IMR-90 (cell line): ENCODE measurements at regions of chr11 and their contacts with region 1.

Region 1: GRCh38 chr11:111512296-111513239 is at the start of gene BTG4:
- DNase-seq: no peak
- ATAC-seq: peak; percentile 40
- H3K4me3 ChIP-seq: peak within 1 kb of the TSS; percentile 16; the same call in 1 of the 2 replicates
- H3K27ac ChIP-seq: no peak within 1 kb of the TSS; the same call in 1 of the 2 replicates
- H3K4me1 ChIP-seq: no peaks in the 10 kb centered on the region
- H3K27me3 ChIP-seq: peaks cover 4% of the 10 kb centered on the region
- CTCF ChIP-seq: no peak
- POLR2A ChIP-seq: no peak
- RAD21 ChIP-seq: no peak
- total RNA-seq, gene BTG4: not detected in 2 replicates

Region 2: GRCh38 chr11:111472228-111472627 is 40.3 kb before region 1 on chr11:
- CTCF ChIA-PET with region 1: no interaction called
- POLR2A ChIA-PET with region 1: no interaction called
- dilution Hi-C with region 1: no loop called
- in situ Hi-C with region 1: no loop called
- intact Hi-C with region 1: loop called (anchors 5 kb)
- DNase-seq: no peak
- ATAC-seq: no peak
- H3K4me3 ChIP-seq: no peak overlapping the region
- H3K27ac ChIP-seq: no peak overlapping the region
- H3K4me1 ChIP-seq: no peaks in the 10 kb centered on the region
- H3K27me3 ChIP-seq: no peaks in the 10 kb centered on the region; the same call in 1 of the 2 replicates
- CTCF ChIP-seq: no peak
- POLR2A ChIP-seq: no peak
- RAD21 ChIP-seq: no peak

Region 3: GRCh38 chr11:111694851-111695250 is 182.3 kb after region 1 on chr11:
- CTCF ChIA-PET with region 1: no interaction called
- POLR2A ChIA-PET with region 1: no interaction called
- dilution Hi-C with region 1: no loop called
- in situ Hi-C with region 1: no loop called
- intact Hi-C with region 1: no loop called
- DNase-seq: peak; percentile 99
- ATAC-seq: peak; percentile 78
- H3K4me3 ChIP-seq: no peak overlapping the region
- H3K27ac ChIP-seq: no peak overlapping the region
- H3K4me1 ChIP-seq: peaks cover 17% of the 10 kb centered on the region
- H3K27me3 ChIP-seq: no peaks in the 10 kb centered on the region
- CTCF ChIP-seq: no peak
- POLR2A ChIP-seq: no peak
- RAD21 ChIP-seq: no peak

Region 4: GRCh38 chr11:112016765-112017356 is 504.3 kb after region 1 on chr11:
- CTCF ChIA-PET with region 1: no interaction called
- POLR2A ChIA-PET with region 1: no interaction called
- dilution Hi-C with region 1: no loop called
- in situ Hi-C with region 1: no loop called
- intact Hi-C with region 1: no loop called
- DNase-seq: peak; percentile 50
- ATAC-seq: peak; percentile 56
- H3K4me3 ChIP-seq: no peak overlapping the region
- H3K27ac ChIP-seq: no peak overlapping the region
- H3K4me1 ChIP-seq: peaks cover 12% of the 10 kb centered on the region
- H3K27me3 ChIP-seq: no peaks in the 10 kb centered on the region
- CTCF ChIP-seq: no peak
- POLR2A ChIP-seq: no peak
- RAD21 ChIP-seq: no peak